Panc1 (cell line): ENCODE measurements at regions of chr15 and their contacts with region 1.

Region 1: DNA sequence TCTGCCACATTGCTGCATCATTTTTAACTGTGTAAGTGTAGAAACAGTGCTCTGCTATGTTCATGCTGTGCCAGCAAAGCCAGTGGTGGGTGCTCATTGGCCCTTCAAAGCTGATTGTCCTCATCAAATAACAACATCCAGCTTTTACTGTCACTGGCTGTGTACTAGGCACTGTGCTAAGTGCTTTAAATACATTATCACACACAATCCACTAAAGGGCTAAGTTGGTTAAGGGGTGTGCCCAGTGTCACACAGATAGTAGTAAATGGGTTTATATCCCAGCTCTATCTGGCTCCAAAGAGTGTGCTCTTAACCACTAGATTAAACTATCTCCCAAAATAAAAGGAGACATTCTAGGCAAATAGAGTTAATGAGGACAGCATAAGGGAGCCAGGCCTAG is 7.7 kb downstream of the TUBGCP4 start:
- DNase-seq: no peak
- ATAC-seq: no peak
- H3K4me3 ChIP-seq: no peak overlapping the region
- H3K27ac ChIP-seq: no peak overlapping the region
- H3K4me1 ChIP-seq: no peaks in the 10 kb centered on the region
- H3K27me3 ChIP-seq: no peaks in the 10 kb centered on the region
- CTCF ChIP-seq: no peak

Region 2: GRCh38 chr15:43274136-43274535 is 104.5 kb before region 1 on chr15:
- CTCF ChIA-PET with region 1: no interaction called
- POLR2A ChIA-PET with region 1: no interaction called
- in situ Hi-C with region 1: no loop called
- intact Hi-C with region 1: no loop called
- DNase-seq: no peak
- ATAC-seq: peak; percentile 41
- H3K4me3 ChIP-seq: no peak overlapping the region
- H3K27ac ChIP-seq: no peak overlapping the region
- H3K4me1 ChIP-seq: no peaks in the 10 kb centered on the region
- H3K27me3 ChIP-seq: no peaks in the 10 kb centered on the region
- CTCF ChIP-seq: no peak

Region 3: DNA sequence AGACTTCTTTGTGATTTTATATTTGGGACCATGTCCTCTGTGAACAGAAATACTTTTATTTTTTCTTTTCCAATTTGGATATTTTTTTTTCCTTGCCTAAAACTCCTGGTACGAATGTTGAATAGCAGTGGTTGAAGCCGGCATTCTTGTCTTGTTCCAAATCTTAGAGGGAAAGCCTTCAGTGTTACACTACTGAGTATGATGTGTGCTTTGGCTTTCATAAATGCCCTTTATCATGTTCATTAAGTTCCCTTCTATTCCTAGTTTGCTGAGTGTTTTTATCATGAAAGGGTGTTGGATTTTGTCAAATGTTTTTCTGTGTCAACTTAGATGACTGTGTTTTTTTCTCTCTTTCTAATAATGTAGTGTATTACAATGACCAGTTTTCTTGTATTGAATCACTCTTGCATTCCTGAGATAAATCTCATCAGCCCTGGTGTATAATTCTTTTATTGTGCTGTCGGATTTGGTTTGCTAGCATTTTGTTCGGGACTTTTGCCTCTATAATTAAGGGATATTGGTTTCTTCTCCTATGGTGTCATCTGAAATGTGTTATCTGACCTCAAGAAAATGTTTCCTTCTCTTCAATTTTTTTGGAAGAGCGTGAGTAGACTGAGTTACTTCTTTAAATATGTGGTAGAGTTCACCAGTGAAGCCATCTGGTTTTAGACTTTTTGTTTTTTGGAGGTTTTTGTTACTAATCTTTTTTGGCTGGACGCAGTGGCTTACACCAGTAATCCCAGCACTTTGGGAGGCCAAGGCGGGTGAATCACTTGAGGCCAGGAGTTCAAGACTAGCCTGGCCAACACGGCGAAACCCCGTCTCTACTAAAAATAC is 172.1 kb after region 1 on chr15:
- CTCF ChIA-PET with region 1: no interaction called
- POLR2A ChIA-PET with region 1: interaction called, 16 read pairs
- in situ Hi-C with region 1: no loop called
- intact Hi-C with region 1: no loop called
- DNase-seq: no peak
- ATAC-seq: no peak
- H3K4me3 ChIP-seq: no peak overlapping the region
- H3K27ac ChIP-seq: no peak overlapping the region
- H3K4me1 ChIP-seq: no peaks in the 10 kb centered on the region
- H3K27me3 ChIP-seq: no peaks in the 10 kb centered on the region
- CTCF ChIP-seq: no peak